ENCODE measurements at regions of chr1 and their contacts with region 1.

Region 1: GRCh38 chr1:111222308-111223125 is 5.0 kb upstream of the CHI3L2 start:
- DNase-seq: peak; percentile 76 to 86 (median 83)
- ATAC-seq: peak; percentile 78 to 88
- H3K4me3 ChIP-seq: no peak overlapping the region
- H3K27ac ChIP-seq: no peak overlapping the region
- H3K4me1 ChIP-seq: peaks cover 3% of the 10 kb centered on the region
- H3K27me3 ChIP-seq: no peaks in the 10 kb centered on the region

Region 2: GRCh38 chr1:111192658-111193519 is 29.6 kb before region 1 on chr1:
- intact Hi-C with region 1: no loop called
- DNase-seq: no peak
- ATAC-seq: peak; percentile 4 to 35
- H3K4me3 ChIP-seq: no peak overlapping the region
- H3K27ac ChIP-seq: peak overlapping the region; percentile 59
- H3K4me1 ChIP-seq: peaks cover 6% of the 10 kb centered on the region
- H3K27me3 ChIP-seq: no peaks in the 10 kb centered on the region

Region 3: DNA sequence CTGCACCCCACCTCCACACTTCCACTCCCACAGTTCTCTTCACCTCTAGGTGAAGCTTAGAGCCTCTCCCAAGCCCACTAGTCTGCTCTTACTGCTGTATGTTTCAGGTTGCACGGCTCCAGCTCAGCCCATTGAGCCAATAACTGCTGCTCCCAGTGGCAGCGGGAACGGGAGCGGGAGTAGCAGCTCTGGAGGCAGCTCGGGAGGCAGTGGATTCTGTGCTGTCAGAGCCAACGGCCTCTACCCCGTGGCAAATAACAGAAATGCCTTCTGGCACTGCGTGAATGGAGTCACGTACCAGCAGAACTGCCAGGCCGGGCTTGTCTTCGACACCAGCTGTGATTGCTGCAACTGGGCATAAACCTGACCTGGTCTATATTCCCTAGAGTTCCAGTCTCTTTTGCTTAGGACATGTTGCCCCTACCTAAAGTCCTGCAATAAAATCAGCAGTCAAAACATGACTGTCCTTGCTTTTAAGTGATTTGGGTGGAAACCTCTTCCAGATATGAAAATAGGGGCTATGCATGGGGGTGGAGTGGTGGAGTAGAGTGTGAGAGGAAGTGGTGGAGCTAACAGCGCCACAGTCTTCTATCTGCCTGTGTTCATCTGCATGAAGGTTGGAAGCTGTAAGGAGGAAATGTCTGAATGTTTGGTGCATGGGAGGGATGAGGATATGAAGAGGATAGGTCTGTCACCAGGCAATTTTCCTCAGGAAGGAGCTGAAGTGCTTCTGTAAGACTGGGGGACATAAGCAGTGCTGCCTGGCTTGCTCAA is 97.8 kb after region 1 on chr1:
- intact Hi-C with region 1: loop called in 1 of 4 experiments (anchors 10 kb)
- DNase-seq: peak in 1 of 3 donors; percentile 27
- ATAC-seq: no peak
- H3K4me3 ChIP-seq: no peak overlapping the region
- H3K27ac ChIP-seq: no peak overlapping the region
- H3K4me1 ChIP-seq: no peaks in the 10 kb centered on the region
- H3K27me3 ChIP-seq: no peaks in the 10 kb centered on the region

Region 4: DNA sequence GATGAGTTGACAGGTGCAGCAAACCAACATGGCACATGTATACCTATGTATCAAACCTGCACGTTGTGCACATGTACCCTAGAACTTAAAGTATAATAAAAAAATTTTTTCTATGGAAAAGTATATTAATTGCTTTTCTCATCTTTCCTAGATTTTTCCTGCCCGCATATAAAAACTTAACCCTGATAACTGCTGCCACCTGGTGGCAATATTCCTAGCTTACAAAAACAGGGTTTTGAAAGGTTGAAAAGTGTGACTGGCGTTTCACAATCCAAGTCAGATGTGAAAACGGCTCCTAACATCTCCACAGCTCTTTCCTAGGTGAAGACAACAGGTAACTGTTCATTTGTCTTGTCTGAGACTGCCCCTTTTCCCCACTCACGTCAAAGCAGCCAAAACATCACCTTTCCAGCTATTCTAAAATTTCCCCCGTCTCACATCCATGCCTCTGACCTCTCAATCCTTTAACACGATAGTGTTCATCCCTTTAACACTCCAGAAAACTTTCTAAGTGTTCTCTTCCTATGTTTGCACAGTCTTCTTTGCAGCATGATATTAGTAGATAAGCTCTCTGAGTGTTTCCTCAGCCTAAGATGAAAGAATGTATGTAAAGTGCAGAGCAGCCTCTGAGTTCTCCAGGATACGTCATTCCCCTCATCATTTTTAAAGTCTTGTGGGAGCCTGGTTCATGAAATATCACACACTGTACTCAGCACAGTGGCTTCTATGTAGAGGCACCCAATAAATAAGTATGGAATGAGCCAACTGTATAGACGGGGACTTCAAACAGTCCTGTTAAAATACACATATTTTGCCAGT is 177.5 kb after region 1 on chr1:
- intact Hi-C with region 1: loop called (anchors 2 to 5 kb)
- DNase-seq: no peak
- ATAC-seq: no peak
- H3K4me3 ChIP-seq: no peak overlapping the region
- H3K27ac ChIP-seq: no peak overlapping the region
- H3K4me1 ChIP-seq: no peaks in the 10 kb centered on the region
- H3K27me3 ChIP-seq: no peaks in the 10 kb centered on the region